Panc1 (cell line): ENCODE measurements at regions of chr22 and their contacts with region 1.

Region 1: DNA sequence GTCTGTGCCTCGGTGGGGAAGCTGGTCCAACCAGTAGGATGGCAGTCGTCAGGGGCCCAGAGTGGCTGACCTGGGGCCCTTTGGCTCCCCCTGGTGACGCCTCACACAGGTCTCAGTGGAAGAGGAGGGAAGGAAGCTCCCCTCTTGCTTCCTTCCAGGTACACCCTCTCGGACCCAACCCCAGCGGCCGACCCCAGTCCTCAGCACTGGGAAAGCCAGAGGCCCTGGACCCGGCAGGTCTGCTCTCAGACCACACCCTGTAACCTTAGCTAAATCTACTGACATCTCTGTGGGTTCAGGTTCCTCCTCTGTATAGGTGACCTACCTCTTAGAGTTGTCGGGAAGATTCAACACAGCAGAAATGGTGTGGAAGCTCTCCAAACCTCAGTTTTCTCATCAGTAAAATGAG is 3.4 kb upstream of the SCUBE1 start:
- DNase-seq: peak; percentile 5
- ATAC-seq: peak; percentile 76
- H3K4me3 ChIP-seq: no peak overlapping the region
- H3K27ac ChIP-seq: no peak overlapping the region
- H3K4me1 ChIP-seq: no peaks in the 10 kb centered on the region
- H3K27me3 ChIP-seq: no peaks in the 10 kb centered on the region
- CTCF ChIP-seq: peak; percentile 81

Region 2: GRCh38 chr22:43239193-43239780 is 107.2 kb before region 1 on chr22:
- CTCF ChIA-PET with region 1: no interaction called
- POLR2A ChIA-PET with region 1: no interaction called
- in situ Hi-C with region 1: no loop called
- intact Hi-C with region 1: no loop called
- DNase-seq: no peak
- ATAC-seq: no peak
- H3K4me3 ChIP-seq: no peak overlapping the region
- H3K27ac ChIP-seq: no peak overlapping the region
- H3K4me1 ChIP-seq: no peaks in the 10 kb centered on the region
- H3K27me3 ChIP-seq: no peaks in the 10 kb centered on the region
- CTCF ChIP-seq: no peak

Region 3: GRCh38 chr22:43273902-43274484 is 72.5 kb before region 1 on chr22:
- CTCF ChIA-PET with region 1: interaction called, 40 read pairs
- POLR2A ChIA-PET with region 1: no interaction called
- in situ Hi-C with region 1: no loop called
- intact Hi-C with region 1: loop called (anchors 2 kb)
- DNase-seq: no peak
- ATAC-seq: peak; percentile 82
- H3K4me3 ChIP-seq: no peak overlapping the region
- H3K27ac ChIP-seq: no peak overlapping the region
- H3K4me1 ChIP-seq: no peaks in the 10 kb centered on the region
- H3K27me3 ChIP-seq: no peaks in the 10 kb centered on the region
- CTCF ChIP-seq: peak; percentile 75

Region 4: GRCh38 chr22:43390872-43391271 is 44.3 kb after region 1 on chr22:
- CTCF ChIA-PET with region 1: no interaction called
- POLR2A ChIA-PET with region 1: no interaction called
- in situ Hi-C with region 1: no loop called
- intact Hi-C with region 1: no loop called
- DNase-seq: no peak
- ATAC-seq: no peak
- H3K4me3 ChIP-seq: no peak overlapping the region
- H3K27ac ChIP-seq: no peak overlapping the region
- H3K4me1 ChIP-seq: no peaks in the 10 kb centered on the region
- H3K27me3 ChIP-seq: peaks cover 2% of the 10 kb centered on the region; the same call in 1 of the 2 replicates
- CTCF ChIP-seq: no peak

Region 5: GRCh38 chr22:43570531-43571165 is 224.1 kb after region 1 on chr22:
- CTCF ChIA-PET with region 1: no interaction called
- POLR2A ChIA-PET with region 1: no interaction called
- in situ Hi-C with region 1: no loop called
- intact Hi-C with region 1: no loop called
- DNase-seq: no peak
- ATAC-seq: no peak
- H3K4me3 ChIP-seq: no peak overlapping the region
- H3K27ac ChIP-seq: no peak overlapping the region
- H3K4me1 ChIP-seq: no peaks in the 10 kb centered on the region
- H3K27me3 ChIP-seq: peaks cover 13% of the 10 kb centered on the region
- CTCF ChIP-seq: no peak